GM12878 (cell line): ENCODE measurements at regions of chr1 and their contacts with region 1.

Region 1: GRCh38 chr1:8477166-8477982 is 159.5 kb downstream of the SLC45A1 start:
- DNase-seq: peak; percentile 93
- ATAC-seq: peak; percentile 87
- H3K4me3 ChIP-seq: no peak overlapping the region
- H3K27ac ChIP-seq: peak overlapping the region; percentile 1; the same call in 1 of the 2 replicates
- H3K4me1 ChIP-seq: peaks cover 53% of the 10 kb centered on the region
- H3K27me3 ChIP-seq: no peaks in the 10 kb centered on the region
- CTCF ChIP-seq: no peak
- EP300 ChIP-seq: peak; percentile 33 to 75; a peak in 1 of 4 replicates
- POLR2A ChIP-seq: no peak
- RAD21 ChIP-seq: no peak

Region 2: DNA sequence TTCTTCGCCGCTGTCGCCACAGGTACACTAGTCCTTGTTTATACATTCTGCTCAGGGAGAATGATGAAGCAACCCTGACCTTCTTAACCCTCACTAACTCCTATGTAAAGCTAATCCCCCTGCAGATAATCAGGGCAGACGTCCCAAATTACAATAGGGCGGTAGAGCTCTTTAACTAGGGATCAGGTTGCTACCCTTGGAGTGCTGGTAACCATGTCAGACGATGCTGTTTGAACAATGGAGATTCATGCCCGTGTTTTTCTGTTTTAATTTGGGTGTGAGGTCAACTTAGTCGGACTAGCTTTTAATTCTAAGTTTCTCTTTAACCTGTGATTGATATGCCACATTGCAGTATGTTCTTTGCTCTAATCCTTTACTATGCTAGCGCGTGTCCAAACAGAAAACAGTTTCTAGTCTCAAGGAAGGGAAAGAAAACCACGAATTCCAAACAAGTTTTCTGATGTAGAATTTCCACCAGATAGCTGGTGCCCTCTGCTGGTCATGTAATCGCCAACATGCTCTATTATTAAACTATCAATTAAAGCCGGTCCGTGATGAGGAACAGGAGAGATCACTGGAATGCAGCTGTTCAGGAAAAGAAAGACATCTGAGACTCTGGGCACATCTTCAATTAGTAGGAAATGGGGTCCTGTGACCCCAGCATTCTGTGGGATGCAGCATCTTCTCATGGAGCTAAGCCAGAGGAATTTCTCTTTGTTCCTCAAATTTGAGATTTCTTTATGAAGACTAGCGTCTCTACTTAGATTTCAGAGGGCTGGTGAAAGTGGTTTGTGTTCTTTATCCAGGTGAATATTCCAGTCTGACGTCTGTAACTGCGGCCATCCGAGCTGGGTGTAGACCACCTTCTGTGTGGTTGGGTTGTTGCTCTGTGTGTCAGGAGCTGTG is 724.6 kb before region 1 on chr1:
- CTCF ChIA-PET with region 1: no interaction called
- POLR2A ChIA-PET with region 1: no interaction called
- RAD21 ChIA-PET with region 1: no interaction called
- SMC1A ChIA-PET with region 1: no interaction called
- in situ Hi-C with region 1: no loop called
- intact Hi-C with region 1: no loop called
- DNase-seq: no peak
- ATAC-seq: peak; percentile 69
- H3K4me3 ChIP-seq: no peak overlapping the region
- H3K27ac ChIP-seq: no peak overlapping the region
- H3K4me1 ChIP-seq: no peaks in the 10 kb centered on the region
- H3K27me3 ChIP-seq: peaks cover 0 to 3% of the 10 kb centered on the region in 2 experiments; a peak in 1 of 4 replicates
- CTCF ChIP-seq: peak; percentile 67 to 77 (median 70)
- EP300 ChIP-seq: no peak
- POLR2A ChIP-seq: no peak
- RAD21 ChIP-seq: peak; percentile 55

Region 3: GRCh38 chr1:8431019-8431418 is 46.4 kb before region 1 on chr1:
- CTCF ChIA-PET with region 1: interaction called, 15 read pairs
- POLR2A ChIA-PET with region 1: interaction called, 15 read pairs
- RAD21 ChIA-PET with region 1: interaction called, 33 read pairs
- SMC1A ChIA-PET with region 1: interaction called, 24 read pairs
- in situ Hi-C with region 1: no loop called
- intact Hi-C with region 1: loop called (anchors 2 kb)
- DNase-seq: no peak
- ATAC-seq: peak; percentile 32
- H3K4me3 ChIP-seq: no peak overlapping the region
- H3K27ac ChIP-seq: no peak overlapping the region
- H3K4me1 ChIP-seq: peaks cover 43% of the 10 kb centered on the region
- H3K27me3 ChIP-seq: no peaks in the 10 kb centered on the region
- CTCF ChIP-seq: peak; percentile 19 to 28 (median 24); a peak in 5 of 6 replicates
- EP300 ChIP-seq: no peak
- POLR2A ChIP-seq: no peak
- RAD21 ChIP-seq: no peak

Region 4: GRCh38 chr1:8463144-8463927 is 14.0 kb before region 1 on chr1:
- CTCF ChIA-PET with region 1: interaction called, 6 read pairs
- POLR2A ChIA-PET with region 1: interaction called, 3 read pairs
- RAD21 ChIA-PET with region 1: interaction called, 5 read pairs
- SMC1A ChIA-PET with region 1: interaction called, 13 read pairs
- in situ Hi-C with region 1: no loop called
- intact Hi-C with region 1: no loop called
- DNase-seq: no peak
- ATAC-seq: no peak
- H3K4me3 ChIP-seq: no peak overlapping the region
- H3K27ac ChIP-seq: no peak overlapping the region
- H3K4me1 ChIP-seq: peaks cover 3% of the 10 kb centered on the region; the same call in 1 of the 2 replicates
- H3K27me3 ChIP-seq: no peaks in the 10 kb centered on the region
- CTCF ChIP-seq: no peak
- EP300 ChIP-seq: no peak
- POLR2A ChIP-seq: no peak
- RAD21 ChIP-seq: no peak

Region 5: DNA sequence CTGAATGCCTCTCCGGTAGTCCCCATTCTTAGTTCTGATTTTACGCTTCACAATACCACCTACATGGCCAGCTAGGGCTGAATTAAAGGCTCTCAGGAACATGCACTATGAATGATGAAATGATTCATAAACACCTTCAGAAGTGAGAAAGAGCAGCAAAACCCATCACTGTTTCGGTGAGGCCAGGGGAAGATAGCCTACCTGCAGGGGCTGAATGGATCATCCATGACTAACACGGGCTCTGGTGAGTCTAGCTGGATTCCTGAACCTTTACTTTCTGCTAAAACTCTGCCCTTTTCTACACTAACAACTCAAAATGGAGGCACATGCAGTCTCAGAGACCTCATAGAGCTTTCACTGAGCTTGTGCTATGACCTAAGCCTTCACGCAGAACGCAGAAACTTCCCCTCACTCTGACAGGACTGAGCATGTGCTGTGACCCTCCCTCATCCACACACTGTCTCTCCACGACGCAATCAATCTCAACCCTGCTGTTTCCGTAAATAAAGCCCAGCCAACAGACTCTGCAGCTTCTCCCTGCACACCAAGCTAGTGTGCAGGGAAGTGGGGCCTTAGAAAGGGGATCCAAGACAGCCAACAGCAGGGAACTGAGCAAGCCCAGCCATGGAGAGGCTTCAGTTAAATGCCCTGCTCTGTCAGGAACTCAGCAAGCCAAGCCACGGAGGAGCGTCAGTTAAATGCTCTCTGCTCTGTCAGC is 48.3 kb after region 1 on chr1:
- CTCF ChIA-PET with region 1: interaction called, 5 read pairs
- POLR2A ChIA-PET with region 1: interaction called, 5 read pairs
- RAD21 ChIA-PET with region 1: interaction called, 11 read pairs
- SMC1A ChIA-PET with region 1: interaction called, 7 read pairs
- in situ Hi-C with region 1: no loop called
- intact Hi-C with region 1: loop called (anchors 5 kb)
- DNase-seq: peak; percentile 66
- ATAC-seq: peak; percentile 85
- H3K4me3 ChIP-seq: peak overlapping the region; percentile 67
- H3K27ac ChIP-seq: peak overlapping the region; percentile 67
- H3K4me1 ChIP-seq: peaks cover 23% of the 10 kb centered on the region
- H3K27me3 ChIP-seq: no peaks in the 10 kb centered on the region
- CTCF ChIP-seq: no peak
- EP300 ChIP-seq: no peak
- POLR2A ChIP-seq: no peak; the same call in 1 of the 2 replicates
- RAD21 ChIP-seq: no peak